Lower leg skin (tissue), 4 donors: ENCODE measurements at regions of chr17 and their contacts with region 1.

Region 1: DNA sequence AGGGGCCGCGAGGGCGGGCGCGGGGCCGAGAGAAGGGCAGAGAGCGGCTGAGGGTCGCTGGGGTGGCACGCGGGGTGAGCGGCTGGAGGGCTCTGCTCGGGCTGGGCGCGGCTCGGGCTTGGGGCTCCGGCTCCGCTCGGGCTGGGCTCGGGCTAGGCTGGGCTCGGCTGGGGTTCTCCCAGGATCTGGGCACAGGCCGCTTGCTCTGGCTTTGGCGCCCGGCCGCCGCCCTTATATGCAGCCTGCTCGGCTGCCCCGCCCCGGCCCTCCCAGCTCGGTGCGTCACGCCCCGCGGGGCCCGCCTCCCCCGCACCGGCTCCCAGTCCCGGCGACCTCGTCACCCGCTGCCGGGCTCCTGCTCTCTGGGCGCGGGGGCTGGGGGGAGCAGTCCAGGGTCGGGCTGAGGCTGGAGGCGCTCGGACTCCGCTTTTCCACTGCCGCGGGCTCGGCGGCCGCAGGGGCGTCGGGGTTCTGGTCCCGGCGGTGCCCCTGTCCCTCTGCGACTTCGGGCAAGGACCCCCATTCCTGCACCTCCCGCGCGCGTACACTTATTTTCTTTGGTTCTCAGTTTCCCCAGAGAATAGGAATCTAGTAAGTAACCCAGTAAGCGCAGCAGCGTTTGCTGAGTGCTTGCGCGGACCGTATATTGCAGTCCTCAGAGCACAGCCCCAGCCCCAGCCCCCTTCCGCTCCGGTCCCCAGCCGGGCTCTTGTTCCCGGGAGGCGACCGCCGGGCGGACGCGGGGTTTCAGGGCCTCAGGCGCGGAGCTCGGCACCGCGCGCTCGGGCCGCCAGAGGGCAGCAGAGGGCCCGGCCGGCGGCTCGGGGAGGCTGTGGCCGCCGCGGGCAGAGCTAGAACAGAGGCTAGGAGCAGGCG is at the start of gene RASD1:
- DNase-seq: peak; percentile 86 to 98
- H3K4me3 ChIP-seq: peak within 1 kb of the TSS; percentile 56
- CTCF ChIP-seq: peak in 1 of 3 donors; percentile 33
- POLR2A ChIP-seq: peak in 1 of 2 donors; percentile 97
- total RNA-seq, gene RASD1: 25.5 to 79.9 (median 40.6) TPM

Region 2: GRCh38 chr17:17356149-17356930 is 140.1 kb before region 1 on chr17:
- intact Hi-C with region 1: loop called (anchors 10 kb)
- DNase-seq: peak; percentile 80 to 96
- H3K4me3 ChIP-seq: no peak overlapping the region
- CTCF ChIP-seq: peak in 2 of 3 donors; percentile 84 to 100
- POLR2A ChIP-seq: no peak

Region 3: DNA sequence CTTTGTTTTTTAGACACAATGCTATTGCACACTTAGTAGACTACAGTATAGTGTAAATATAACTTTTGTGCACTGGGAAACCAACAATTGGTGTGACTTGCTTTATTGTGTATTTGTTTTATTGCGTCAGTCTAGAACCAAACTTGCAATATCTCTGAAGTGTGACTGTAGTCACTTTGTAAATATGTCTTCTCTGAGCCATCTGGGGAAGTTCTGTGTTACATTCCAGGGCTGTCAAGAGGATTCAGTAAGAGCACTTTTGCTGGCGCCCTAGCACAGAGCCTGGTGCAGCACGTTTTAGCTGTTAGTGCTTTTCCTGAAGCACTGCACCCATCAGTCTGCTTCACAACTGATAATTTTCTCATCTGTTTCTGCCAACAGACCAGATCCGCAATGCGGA is 120.1 kb before region 1 on chr17:
- intact Hi-C with region 1: no loop called
- DNase-seq: no peak
- H3K4me3 ChIP-seq: no peak overlapping the region
- CTCF ChIP-seq: no peak
- POLR2A ChIP-seq: no peak

Region 4: DNA sequence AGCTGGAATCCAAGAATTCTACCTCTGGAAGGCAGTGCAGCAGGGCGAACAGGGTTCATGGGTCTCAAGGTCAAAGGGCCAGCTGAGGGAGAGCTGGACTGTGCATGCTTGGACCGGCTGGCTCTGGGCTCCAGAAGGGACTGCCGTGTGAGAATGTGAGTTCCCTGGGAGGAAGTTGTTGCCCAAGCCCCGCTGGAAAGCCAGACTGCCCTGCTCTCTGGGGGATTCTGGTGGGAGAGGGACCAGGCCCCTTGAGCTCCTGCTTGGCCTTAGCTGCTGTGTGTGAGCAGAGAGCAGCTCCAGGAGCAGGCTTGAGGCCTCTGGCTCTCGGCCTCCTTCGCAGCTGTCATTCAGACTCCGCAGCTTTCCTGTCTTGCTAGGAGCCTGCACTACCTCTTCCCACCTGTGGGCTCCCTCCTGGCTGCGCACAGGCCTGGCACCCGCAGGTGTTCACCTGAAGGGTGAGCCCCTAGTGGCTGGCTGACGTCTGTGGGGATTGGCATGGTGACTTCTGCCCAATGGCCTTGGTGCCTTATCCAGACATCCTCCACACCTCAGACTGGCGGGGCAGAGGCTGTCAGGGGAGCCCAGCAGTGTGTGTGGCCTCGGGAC is 108.5 kb before region 1 on chr17:
- intact Hi-C with region 1: no loop called
- DNase-seq: no peak
- H3K4me3 ChIP-seq: no peak overlapping the region
- CTCF ChIP-seq: peak in 1 of 3 donors; percentile 47
- POLR2A ChIP-seq: no peak

Region 5: GRCh38 chr17:17580662-17581470 is 84.4 kb after region 1 on chr17:
- intact Hi-C with region 1: no loop called
- DNase-seq: no peak
- H3K4me3 ChIP-seq: no peak overlapping the region
- CTCF ChIP-seq: peak in 1 of 3 donors; percentile 12
- POLR2A ChIP-seq: no peak

Region 6: DNA sequence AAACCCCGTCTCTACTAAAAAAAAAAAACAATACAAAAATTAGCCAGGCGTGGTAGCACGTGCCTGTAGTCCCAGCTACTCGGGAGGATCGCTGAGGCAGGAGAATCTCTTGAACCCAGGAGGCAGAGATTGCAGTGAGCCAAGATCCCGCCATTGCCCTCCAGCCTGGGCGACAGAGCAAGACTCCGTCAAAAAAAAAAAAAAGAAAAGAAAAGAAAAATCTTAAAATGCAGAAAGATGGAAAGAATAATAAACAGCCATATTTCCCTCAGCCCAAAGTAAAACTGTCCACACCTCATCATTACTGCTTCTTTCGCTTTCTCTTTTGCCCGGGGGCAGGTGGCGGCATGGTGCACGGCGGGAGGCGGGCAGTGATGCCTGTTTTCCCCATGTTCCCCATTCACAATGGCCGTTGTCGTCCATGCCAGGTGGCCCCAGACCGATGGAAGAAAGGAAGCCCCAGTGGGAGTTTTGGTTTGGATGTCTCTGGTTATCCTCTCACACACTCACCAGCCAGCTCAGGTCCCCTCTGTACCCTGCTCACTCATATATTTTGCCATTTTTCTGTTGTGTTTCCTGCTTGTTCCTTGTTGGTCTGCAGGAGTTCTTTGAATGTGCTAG is 132.1 kb after region 1 on chr17:
- intact Hi-C with region 1: loop called (anchors 10 kb)
- DNase-seq: no peak
- H3K4me3 ChIP-seq: no peak overlapping the region
- CTCF ChIP-seq: no peak
- POLR2A ChIP-seq: no peak

Region 7: GRCh38 chr17:17641621-17642409 is 145.4 kb after region 1 on chr17:
- intact Hi-C with region 1: loop called (anchors 5 kb)
- DNase-seq: peak; percentile 71 to 95
- H3K4me3 ChIP-seq: no peak overlapping the region
- CTCF ChIP-seq: peak in 1 of 3 donors; percentile 78
- POLR2A ChIP-seq: no peak